ENCODE measurements at regions of chr1 and their contacts with region 1.

Region 1: GRCh38 chr1:2300851-2301606 is 72.9 kb downstream of the SKI start:
- DNase-seq: peak; percentile 84
- H3K4me3 Mint-ChIP-seq: peak overlapping the region; percentile 76
- H3K27ac Mint-ChIP-seq: peak overlapping the region; percentile 93
- H3K4me1 Mint-ChIP-seq: peaks cover 36% of the 10 kb centered on the region
- H3K27me3 Mint-ChIP-seq: no peaks in the 10 kb centered on the region

Region 2: GRCh38 chr1:2194898-2195673 is 105.9 kb before region 1 on chr1:
- intact Hi-C with region 1: loop called (anchors 2 kb)
- DNase-seq: peak; percentile 91
- H3K4me3 Mint-ChIP-seq: peak overlapping the region; percentile 84
- H3K27ac Mint-ChIP-seq: peak overlapping the region; percentile 92
- H3K4me1 Mint-ChIP-seq: peaks cover 16% of the 10 kb centered on the region
- H3K27me3 Mint-ChIP-seq: no peaks in the 10 kb centered on the region

Region 3: GRCh38 chr1:2233997-2234761 is 66.8 kb before region 1 on chr1:
- intact Hi-C with region 1: loop called (anchors 2 kb)
- DNase-seq: peak; percentile 66
- H3K4me3 Mint-ChIP-seq: peak overlapping the region; percentile 92
- H3K27ac Mint-ChIP-seq: peak overlapping the region; percentile 81
- H3K4me1 Mint-ChIP-seq: peaks cover 62% of the 10 kb centered on the region
- H3K27me3 Mint-ChIP-seq: no peaks in the 10 kb centered on the region

Region 4: DNA sequence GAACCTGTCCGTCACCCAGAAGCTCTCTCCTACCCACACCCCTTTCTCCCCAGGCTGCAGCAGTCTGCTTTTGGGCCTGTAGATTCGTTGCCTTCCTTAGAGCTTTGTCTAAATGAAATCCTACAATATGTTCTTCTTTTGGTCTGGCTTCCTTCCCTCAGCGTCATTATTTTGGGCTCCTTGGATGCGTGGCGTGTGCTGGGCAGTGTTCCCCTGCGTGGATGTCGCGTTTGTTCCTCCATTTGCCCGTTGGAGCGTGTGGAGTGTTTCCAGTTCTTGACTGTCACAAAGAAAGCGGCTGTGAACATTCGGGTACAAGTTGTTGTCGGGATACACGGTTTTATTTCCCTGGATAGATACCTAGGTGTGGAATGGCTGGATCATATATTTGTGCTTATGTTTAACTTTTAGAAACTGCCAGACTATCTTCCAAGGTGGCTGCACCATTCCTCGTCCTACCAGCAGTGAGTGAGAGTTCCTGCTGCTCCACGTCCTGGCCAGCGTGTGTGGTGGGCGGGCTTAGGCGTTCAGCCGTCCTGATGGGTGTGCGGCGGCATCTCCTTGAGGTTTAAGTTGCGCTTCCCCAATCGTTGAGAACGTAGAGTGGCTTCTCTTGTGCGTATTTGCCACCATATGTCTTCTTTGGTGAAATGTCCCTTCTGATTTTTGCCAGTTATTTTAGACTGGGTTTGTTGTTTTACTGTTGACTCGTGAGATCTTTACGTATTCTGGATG is 41.2 kb before region 1 on chr1:
- intact Hi-C with region 1: loop called (anchors 1 kb)
- DNase-seq: no peak
- H3K4me3 Mint-ChIP-seq: no peak overlapping the region
- H3K27ac Mint-ChIP-seq: peak overlapping the region; percentile 68
- H3K4me1 Mint-ChIP-seq: peaks cover 34% of the 10 kb centered on the region
- H3K27me3 Mint-ChIP-seq: no peaks in the 10 kb centered on the region

Region 5: DNA sequence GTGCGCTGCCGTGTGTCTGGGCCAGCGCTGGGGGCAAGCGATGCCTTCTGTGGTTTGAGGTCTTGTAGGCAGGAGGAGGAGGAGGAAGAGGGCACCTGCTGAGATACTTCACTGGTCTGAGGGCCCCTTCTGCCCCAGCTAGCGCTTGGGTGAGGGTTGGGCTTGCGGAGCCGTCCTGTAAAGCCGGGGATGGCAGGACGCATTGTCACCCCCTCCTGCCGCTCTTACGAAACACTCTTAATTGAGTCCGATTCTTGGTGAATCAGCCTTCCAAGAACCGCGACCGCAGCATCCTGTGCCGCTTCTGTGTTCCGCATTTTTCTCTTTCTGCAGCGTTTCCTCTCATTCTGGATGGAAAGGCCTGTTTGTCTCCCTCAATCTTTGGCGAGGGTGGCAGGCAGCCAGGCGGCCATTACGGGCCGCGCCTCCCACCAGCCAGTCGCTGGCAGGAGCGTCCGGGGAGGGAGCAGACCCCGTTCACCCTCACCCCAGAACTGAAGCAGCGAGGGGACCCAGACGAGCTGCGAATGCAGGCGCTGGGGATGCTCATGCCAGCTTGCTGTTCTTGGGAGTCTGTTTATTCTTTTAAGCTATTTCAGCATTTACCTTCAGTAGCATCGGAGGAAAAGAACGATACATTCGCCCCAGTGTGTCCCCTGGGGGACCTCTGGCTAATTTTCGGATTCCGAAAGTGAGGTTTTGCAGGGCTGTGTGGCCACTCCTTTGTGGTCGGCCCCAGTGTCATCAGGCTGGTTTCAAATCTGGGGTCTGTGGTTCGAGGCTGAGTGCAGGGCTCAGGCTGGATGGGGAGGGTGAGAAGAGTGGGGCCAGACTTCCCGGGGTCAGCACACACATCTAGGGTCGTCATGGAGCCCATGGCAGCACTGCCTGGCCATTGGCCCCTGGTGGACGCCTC is 10.2 kb before region 1 on chr1:
- intact Hi-C with region 1: loop called (anchors 1 kb)
- DNase-seq: peak; percentile 77
- H3K4me3 Mint-ChIP-seq: peak overlapping the region; percentile 80
- H3K27ac Mint-ChIP-seq: peak overlapping the region; percentile 93
- H3K4me1 Mint-ChIP-seq: peaks cover 64% of the 10 kb centered on the region
- H3K27me3 Mint-ChIP-seq: no peaks in the 10 kb centered on the region

Region 6: DNA sequence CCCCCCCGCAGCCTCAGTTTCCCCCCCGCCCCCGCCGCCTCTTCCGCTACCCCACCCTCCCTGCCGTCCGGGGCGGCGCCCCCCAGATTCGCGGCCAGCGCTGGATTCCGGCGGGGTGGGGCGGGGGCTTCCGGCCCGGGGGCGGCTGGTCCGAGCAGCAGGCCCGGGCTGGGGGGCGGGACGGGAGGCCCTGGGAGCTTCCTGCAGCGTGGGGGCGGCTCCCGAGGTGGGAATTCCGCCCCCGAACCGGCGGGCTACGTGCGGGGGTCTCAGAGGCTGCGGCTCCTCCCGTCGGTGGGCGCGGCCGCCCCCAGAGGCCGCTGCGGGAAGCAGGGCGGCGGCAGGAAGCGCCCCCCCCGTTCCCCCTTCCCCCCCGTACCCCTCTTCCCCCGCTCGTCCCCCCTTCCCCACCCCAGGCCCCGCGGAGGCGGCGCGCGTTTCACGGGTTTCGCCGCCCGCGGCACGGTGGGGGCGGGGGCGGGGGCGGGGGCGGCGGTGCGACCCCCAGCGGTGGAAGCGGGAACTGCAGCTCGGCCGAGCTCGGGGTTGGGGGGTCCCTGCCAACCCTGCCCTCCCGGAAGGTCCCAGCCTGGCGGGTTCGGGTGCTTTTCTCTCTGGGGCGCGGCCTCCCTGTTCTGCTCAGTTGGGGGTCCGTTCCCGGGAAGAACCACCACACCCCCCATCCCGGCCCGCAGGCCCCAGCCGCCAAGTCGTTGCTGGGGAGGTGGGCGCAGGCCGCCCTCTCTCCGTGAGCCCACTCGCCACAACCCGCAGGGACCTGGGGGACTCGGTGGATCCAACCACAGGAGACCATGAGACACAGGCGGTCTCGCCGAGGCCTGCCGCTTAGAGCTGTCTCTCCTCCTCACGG is 14.0 kb after region 1 on chr1:
- intact Hi-C with region 1: loop called (anchors 2 kb)
- DNase-seq: peak; percentile 42
- H3K4me3 Mint-ChIP-seq: no peak overlapping the region
- H3K27ac Mint-ChIP-seq: no peak overlapping the region
- H3K4me1 Mint-ChIP-seq: no peaks in the 10 kb centered on the region
- H3K27me3 Mint-ChIP-seq: no peaks in the 10 kb centered on the region